ENCODE measurements at regions of chrX and their contacts with region 1.

Region 1: DNA sequence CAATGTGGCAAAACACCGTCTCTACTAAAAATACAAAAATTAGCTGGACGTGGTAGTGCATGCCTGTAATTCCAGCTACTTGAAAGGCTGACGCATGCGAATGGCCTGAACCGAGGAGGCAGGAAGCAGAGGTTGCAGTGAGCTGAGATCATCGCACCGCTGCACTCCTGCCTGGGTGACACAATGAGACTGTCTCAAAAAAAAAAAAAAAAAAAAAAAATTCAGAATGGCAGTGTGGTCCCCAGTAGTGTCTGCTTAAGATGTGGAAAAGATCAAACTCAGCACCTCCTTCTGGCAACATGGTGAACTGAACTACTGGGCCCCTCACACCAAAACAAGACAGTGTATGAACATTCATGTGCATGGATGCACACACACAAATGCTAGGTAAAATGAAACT is 32.2 kb downstream of the SMS start:
- DNase-seq: peak in 7 of 9 donors; percentile 11 to 48 (median 31)
- ATAC-seq: peak; percentile 83
- H3K4me3 ChIP-seq: no peak overlapping the region
- H3K4me3 Mint-ChIP-seq: peak overlapping the region in 9 of 10 donors; percentile 30 to 82 (median 61)
- H3K27ac ChIP-seq: no peak overlapping the region
- H3K27ac Mint-ChIP-seq: peak overlapping the region; percentile 82 to 98 (median 94)
- H3K4me1 ChIP-seq: peaks cover 10% of the 10 kb centered on the region in 2 donors
- H3K4me1 Mint-ChIP-seq: peaks cover 0 to 37% (median 26%) of the 10 kb centered on the region in 7 donors
- H3K27me3 ChIP-seq: no peaks in the 10 kb centered on the region
- H3K27me3 Mint-ChIP-seq: no peaks in the 10 kb centered on the region

Region 2: GRCh38 chrX:21926527-21927278 is 46.0 kb before region 1 on chrX:
- CTCF ChIA-PET with region 1: no interaction called
- POLR2A ChIA-PET with region 1: no interaction called
- intact Hi-C with region 1: loop called in 1 of 2 experiments (anchors 5 kb)
- DNase-seq: no peak
- ATAC-seq: peak; percentile 56
- H3K4me3 ChIP-seq: no peak overlapping the region
- H3K4me3 Mint-ChIP-seq: peak overlapping the region in 1 of 10 donors; percentile 56
- H3K27ac ChIP-seq: no peak overlapping the region
- H3K27ac Mint-ChIP-seq: peak overlapping the region in 1 of 9 donors; percentile 82
- H3K4me1 ChIP-seq: no peaks in the 10 kb centered on the region
- H3K4me1 Mint-ChIP-seq: peaks cover 1 to 30% (median 10%) of the 10 kb centered on the region in 7 donors
- H3K27me3 ChIP-seq: no peaks in the 10 kb centered on the region
- H3K27me3 Mint-ChIP-seq: no peaks in the 10 kb centered on the region

Region 3: GRCh38 chrX:21940356-21940829 is 32.3 kb before region 1 on chrX and contains the start of gene SMS:
- CTCF ChIA-PET with region 1: no interaction called
- POLR2A ChIA-PET with region 1: no interaction called
- intact Hi-C with region 1: loop called in 1 of 2 experiments (anchors 2 kb)
- DNase-seq: peak; percentile 8 to 64 (median 16)
- ATAC-seq: peak; percentile 77
- H3K4me3 ChIP-seq: peak within 1 kb of the TSS; percentile 46
- H3K4me3 Mint-ChIP-seq: peak within 1 kb of the TSS; percentile 78 to 90 (median 84)
- H3K27ac ChIP-seq: peak within 1 kb of the TSS; percentile 62
- H3K27ac Mint-ChIP-seq: peak within 1 kb of the TSS; percentile 60 to 90 (median 80)
- H3K4me1 ChIP-seq: peaks cover 0 to 5% of the 10 kb centered on the region in 2 donors
- H3K4me1 Mint-ChIP-seq: peaks cover 8 to 22% (median 19%) of the 10 kb centered on the region in 7 donors
- H3K27me3 ChIP-seq: no peaks in the 10 kb centered on the region
- H3K27me3 Mint-ChIP-seq: no peaks in the 10 kb centered on the region
- total RNA-seq, gene SMS: 14.7 to 57.4 (median 20.4) TPM